Activated CD4-positive, alpha-beta memory T cell treated with anti-CD3 and anti-CD28 coated beads, Interleukin-2, amount 10 ng/mL, durations not matched to agents 7 days and 5 days (primary cell): ENCODE measurements at regions of chr1 and their contacts with region 1.

Region 1: GRCh38 chr1:116724765-116725375 is 29.4 kb upstream of the CD2 start:
- DNase-seq: peak; percentile 81
- H3K4me3 Mint-ChIP-seq: no peak overlapping the region
- H3K27ac Mint-ChIP-seq: no peak overlapping the region
- H3K4me1 Mint-ChIP-seq: peaks cover 23% of the 10 kb centered on the region
- H3K27me3 Mint-ChIP-seq: no peaks in the 10 kb centered on the region

Region 2: GRCh38 chr1:116679091-116679827 is 45.6 kb before region 1 on chr1:
- CTCF ChIA-PET with region 1: no interaction called
- POLR2A ChIA-PET with region 1: no interaction called
- DNase-seq: no peak
- H3K4me3 Mint-ChIP-seq: no peak overlapping the region
- H3K27ac Mint-ChIP-seq: no peak overlapping the region
- H3K4me1 Mint-ChIP-seq: no peaks in the 10 kb centered on the region
- H3K27me3 Mint-ChIP-seq: peaks cover 28% of the 10 kb centered on the region

Region 3: DNA sequence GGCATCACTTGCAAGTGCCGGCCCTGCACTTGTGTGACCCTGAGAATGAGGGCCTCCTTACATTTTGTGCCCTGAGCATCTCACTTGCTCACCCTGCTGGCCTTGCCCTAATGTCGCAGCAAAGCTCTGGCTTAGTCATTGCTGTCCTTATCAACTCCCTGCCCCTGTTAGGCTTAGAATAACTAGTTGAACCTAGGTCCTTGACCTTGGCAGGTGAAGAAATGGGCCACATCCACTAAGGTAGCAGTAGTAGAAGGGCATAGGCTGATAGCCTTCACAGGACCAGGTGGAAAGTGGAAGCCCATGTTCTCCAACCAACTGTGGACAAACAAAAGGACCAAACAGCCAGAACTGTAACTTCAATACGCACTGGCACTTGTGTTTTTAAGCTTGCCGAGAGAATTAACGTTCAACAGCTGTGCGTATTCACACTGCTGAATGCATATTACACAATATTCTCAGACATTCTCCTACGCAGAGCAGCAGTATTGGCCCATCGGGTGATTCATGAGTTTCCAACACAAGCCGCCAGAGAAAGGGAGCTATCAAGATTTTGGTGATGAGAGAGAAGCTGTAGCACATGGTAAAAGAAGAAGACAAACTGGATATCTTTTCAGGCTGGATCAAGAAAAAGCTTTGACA is 157.1 kb after region 1 on chr1:
- CTCF ChIA-PET with region 1: interaction called, 14 read pairs
- POLR2A ChIA-PET with region 1: no interaction called
- DNase-seq: peak; percentile 53
- H3K4me3 Mint-ChIP-seq: no peak overlapping the region
- H3K27ac Mint-ChIP-seq: no peak overlapping the region
- H3K4me1 Mint-ChIP-seq: peaks cover 5% of the 10 kb centered on the region
- H3K27me3 Mint-ChIP-seq: no peaks in the 10 kb centered on the region